Ascending aorta (tissue), 2 donors: ENCODE measurements at regions of chr1 and their contacts with region 1.

Region 1: GRCh38 chr1:228165372-228166169 is at the start of gene IBA57:
- DNase-seq: peak; percentile 96 to 99
- H3K4me3 ChIP-seq: peak within 1 kb of the TSS; percentile 80 to 91
- H3K27ac ChIP-seq: peak within 1 kb of the TSS; percentile 94 to 98
- H3K4me1 ChIP-seq: peaks cover 0 to 11% of the 10 kb centered on the region in 2 donors
- H3K27me3 ChIP-seq: no peaks in the 10 kb centered on the region
- CTCF ChIP-seq: peak; percentile 84 to 97 (median 87)
- total RNA-seq, gene IBA57: 55.6 TPM

Region 2: DNA sequence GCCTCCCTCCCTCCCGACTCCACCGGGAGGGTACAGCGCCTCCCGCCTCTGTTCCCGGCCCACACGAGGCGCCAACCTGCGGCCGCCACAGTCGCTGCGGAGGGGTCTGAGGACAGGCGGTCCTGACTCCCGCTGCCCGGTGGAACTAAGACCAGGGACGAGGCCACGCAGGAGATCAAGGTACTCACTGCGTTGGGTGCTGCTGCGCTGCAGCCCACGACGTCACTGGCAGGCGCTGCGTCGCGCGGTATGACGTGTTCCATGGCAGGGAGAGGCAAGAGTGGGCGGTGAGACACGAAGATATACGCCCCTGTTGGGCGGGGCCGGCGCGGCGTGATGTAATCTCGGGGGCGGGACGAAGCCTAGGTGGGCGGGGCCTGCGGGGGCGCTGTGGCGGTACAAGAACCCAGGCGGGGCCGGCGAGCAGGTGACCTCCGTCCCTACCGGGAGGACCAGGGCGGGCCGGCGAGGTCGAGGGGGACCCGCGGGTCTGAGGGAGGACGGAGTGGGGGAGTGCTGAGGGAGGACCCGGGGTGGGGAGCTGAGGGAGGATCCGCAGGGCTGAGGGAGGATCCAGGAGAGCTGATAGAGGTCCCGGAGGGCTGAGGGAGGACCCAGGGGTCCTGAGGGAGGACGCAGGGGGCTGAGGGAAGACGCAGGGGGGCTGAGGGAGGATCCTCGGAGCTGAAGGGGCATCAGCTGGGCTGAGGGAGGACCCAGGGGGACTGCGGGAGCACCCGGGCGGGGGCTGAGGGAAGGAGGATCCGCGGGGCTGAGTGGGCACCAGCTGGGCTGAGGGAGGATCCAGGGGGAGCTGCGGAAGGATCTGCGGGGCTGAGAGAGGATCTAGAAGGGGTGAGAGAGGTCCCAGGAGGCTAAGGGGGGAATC is 56.3 kb before region 1 on chr1 and contains the start of gene MRPL55:
- intact Hi-C with region 1: loop called (anchors 1 kb)
- DNase-seq: peak; percentile 94 to 99
- H3K4me3 ChIP-seq: peak within 1 kb of the TSS; percentile 77 to 97
- H3K27ac ChIP-seq: peak within 1 kb of the TSS; percentile 88 to 89
- H3K4me1 ChIP-seq: peaks cover 14 to 18% of the 10 kb centered on the region in 2 donors
- H3K27me3 ChIP-seq: no peaks in the 10 kb centered on the region
- CTCF ChIP-seq: peak in 1 of 3 experiments; percentile 9
- total RNA-seq, gene MRPL55: 23.6 TPM

Region 3: DNA sequence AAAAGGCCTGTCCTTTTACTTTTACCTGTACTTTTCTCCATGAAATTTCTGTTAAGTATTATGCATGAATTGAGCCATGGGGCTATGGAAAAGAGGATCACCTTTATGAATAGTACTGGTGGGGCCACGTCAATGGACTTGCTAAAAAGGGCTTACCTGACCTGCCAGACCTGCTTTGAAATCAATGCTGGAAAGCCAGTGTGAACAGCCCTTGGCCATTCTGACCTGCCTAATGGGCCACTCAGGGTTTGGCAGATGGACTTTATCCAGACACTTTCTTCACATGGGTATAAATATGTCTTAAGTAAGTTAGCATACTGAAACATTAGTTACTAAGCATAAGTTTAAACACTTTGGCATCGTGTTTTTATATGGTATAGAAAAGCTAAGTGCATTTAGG is 33.8 kb before region 1 on chr1:
- intact Hi-C with region 1: loop called (anchors 5 kb)
- DNase-seq: no peak
- H3K4me3 ChIP-seq: no peak overlapping the region
- H3K27ac ChIP-seq: no peak overlapping the region
- H3K4me1 ChIP-seq: no peaks in the 10 kb centered on the region
- H3K27me3 ChIP-seq: no peaks in the 10 kb centered on the region
- CTCF ChIP-seq: no peak

Region 4: DNA sequence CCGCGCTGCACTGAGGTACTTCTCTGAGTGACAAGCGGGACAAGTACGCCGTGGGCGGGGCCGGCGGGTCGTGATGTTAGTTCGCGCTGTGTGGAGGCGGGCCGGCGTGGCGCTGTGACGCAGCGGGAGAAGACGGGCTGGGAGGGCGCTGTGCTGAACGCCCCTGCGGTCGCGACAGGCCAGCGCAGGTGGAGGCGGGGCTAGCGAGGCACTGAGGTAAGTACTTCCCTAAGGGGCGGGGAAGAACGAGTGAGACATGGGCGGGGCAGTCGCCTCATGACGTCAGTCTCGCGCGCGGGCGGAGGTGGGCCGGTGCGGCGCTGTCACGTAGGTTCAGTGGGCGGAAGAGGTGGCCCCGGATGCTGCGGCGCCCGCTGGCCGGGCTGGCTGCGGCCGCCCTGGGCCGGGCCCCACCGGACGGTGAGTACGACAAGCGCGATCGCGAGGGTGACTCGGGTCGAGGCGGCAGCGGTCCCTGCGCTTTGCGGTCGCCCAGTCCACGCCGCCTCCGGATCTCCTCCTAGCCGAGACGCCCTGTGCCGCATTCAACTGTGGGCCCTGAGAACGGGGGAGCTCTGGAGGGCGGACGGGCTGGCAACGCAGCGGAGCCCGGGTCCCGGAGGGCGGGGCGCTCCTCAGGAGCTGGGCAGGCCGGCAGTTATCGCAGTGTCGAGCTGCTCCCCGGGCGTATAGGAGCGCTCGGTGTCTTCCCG is 25.5 kb before region 1 on chr1 and contains the start of gene GUK1:
- intact Hi-C with region 1: loop called (anchors 1 kb)
- DNase-seq: peak; percentile 100
- H3K4me3 ChIP-seq: peak within 1 kb of the TSS; percentile 79 to 92
- H3K27ac ChIP-seq: peak within 1 kb of the TSS; percentile 90 to 96
- H3K4me1 ChIP-seq: peaks cover 18 to 34% of the 10 kb centered on the region in 2 donors
- H3K27me3 ChIP-seq: no peaks in the 10 kb centered on the region
- CTCF ChIP-seq: peak in 1 of 3 experiments; percentile 17
- total RNA-seq, gene GUK1: 979 TPM

Region 5: DNA sequence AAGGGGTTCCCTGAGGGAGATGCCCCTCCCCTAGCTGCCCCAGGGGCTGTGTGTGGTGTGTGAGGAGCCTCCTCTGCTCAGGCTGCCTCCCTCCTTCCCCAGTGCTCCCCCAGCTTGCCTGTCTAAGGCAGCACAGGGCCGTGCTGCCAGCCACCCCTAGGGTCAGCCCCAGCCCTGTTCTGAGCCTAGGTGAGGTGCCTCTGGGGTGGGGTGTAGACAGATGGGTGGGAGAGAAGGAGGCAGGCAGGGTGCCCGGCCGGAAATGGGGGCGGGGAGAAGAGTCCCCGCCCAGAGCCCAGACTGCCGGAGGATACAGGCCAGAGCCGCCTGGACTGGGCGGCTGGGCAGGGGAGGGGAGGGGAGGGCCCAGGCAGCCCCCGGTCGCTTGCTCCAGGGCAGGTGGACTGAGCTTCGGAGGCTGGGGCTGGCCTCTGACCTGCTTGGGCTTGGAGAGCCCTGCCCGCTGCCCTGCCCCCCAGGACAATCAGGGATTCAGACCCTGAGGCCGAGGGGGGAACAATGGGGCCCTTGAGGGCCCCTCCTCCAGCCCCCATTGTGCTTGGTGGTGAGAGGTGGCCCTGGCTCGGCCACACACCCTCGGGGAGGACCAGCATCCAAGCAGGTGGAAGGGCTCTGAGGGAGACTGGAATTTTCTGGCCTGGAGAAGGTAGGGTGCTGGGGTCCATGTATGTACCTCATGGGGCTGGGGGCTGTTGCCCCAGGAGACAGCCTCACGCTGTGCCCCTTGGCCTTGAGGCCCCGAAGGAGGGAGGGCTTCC is 16.0 kb before region 1 on chr1 and contains the start of gene GJC2:
- intact Hi-C with region 1: loop called (anchors 1 kb)
- DNase-seq: no peak
- H3K4me3 ChIP-seq: peak within 1 kb of the TSS in 1 of 2 donors; percentile 34
- H3K27ac ChIP-seq: peak within 1 kb of the TSS; percentile 81 to 93
- H3K4me1 ChIP-seq: peaks cover 8 to 32% of the 10 kb centered on the region in 2 donors
- H3K27me3 ChIP-seq: no peaks in the 10 kb centered on the region
- CTCF ChIP-seq: no peak
- total RNA-seq, gene GJC2: 5.4 TPM